CD4-positive, alpha-beta T cell (primary cell): ENCODE measurements at regions of chr12 and their contacts with region 1.

Region 1: DNA sequence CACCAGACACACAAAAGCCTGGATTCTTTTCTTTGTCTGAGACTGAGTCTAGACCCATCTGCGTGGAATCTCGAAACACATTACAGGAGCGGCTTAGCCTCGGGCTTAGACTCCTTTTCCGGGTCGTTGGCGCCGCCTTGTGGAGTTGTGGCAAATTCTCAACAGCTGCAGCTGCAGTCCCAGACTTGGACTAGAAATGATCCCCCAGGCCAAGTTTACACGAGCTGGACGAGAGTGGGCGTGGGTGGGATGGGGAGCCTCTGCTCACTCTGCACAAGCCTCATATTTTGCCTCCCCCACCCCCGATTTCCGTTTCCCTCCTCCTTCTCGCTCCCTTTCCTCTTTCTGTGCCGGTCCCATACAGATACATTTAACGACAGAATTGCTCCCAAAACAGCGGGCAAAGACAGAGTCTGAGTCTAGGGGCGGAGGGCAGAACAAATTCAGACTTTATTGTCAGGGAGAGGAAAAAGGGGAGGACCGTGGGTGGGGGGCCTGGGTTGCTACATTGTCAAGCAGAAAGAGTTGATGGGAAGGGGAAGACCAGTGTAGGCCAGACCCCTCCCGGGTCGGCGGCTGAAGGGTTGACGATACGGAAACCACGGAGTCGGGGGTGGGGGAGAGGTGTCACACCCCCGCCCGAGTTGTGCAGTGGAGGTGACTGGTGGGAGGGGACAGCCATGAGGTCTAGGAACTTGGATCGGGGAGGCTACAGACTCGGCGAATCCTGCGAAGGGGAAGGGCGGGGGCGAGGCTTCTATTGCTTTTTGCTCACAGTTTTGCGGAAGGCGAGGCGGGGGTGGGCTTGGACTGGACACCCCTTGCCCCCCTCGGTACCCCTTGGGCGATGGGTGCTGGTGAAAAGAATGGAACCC is 4.7 kb upstream of the GPR84 start:
- DNase-seq: peak; percentile 85 to 95 (median 88)
- ATAC-seq: peak; percentile 97
- H3K4me3 ChIP-seq: peak overlapping the region; percentile 12
- H3K4me3 Mint-ChIP-seq: peak overlapping the region; percentile 57
- H3K27ac ChIP-seq: no peak overlapping the region
- H3K27ac Mint-ChIP-seq: no peak overlapping the region
- H3K4me1 ChIP-seq: peaks cover 35% of the 10 kb centered on the region
- H3K4me1 Mint-ChIP-seq: peaks cover 39% of the 10 kb centered on the region
- H3K27me3 ChIP-seq: no peaks in the 10 kb centered on the region
- H3K27me3 Mint-ChIP-seq: no peaks in the 10 kb centered on the region
- CTCF ChIP-seq: peak; percentile 85

Region 2: GRCh38 chr12:54220092-54220557 is 148.8 kb before region 1 on chr12:
- CTCF ChIA-PET with region 1: interaction called, 3 read pairs
- POLR2A ChIA-PET with region 1: interaction called, 3 read pairs
- intact Hi-C with region 1: loop called (anchors 1 to 2 kb)
- DNase-seq: peak; percentile 46 to 80 (median 56)
- ATAC-seq: peak; percentile 57
- H3K4me3 ChIP-seq: no peak overlapping the region
- H3K4me3 Mint-ChIP-seq: no peak overlapping the region
- H3K27ac ChIP-seq: no peak overlapping the region
- H3K27ac Mint-ChIP-seq: no peak overlapping the region
- H3K4me1 ChIP-seq: peaks cover 35% of the 10 kb centered on the region
- H3K4me1 Mint-ChIP-seq: peaks cover 42% of the 10 kb centered on the region
- H3K27me3 ChIP-seq: no peaks in the 10 kb centered on the region
- H3K27me3 Mint-ChIP-seq: peaks cover 8% of the 10 kb centered on the region
- CTCF ChIP-seq: peak; percentile 60

Region 3: GRCh38 chr12:54294152-54294952 is 74.6 kb before region 1 on chr12:
- CTCF ChIA-PET with region 1: interaction called, 7 read pairs
- POLR2A ChIA-PET with region 1: no interaction called
- intact Hi-C with region 1: loop called (anchors 1 kb)
- DNase-seq: peak in 13 of 14 experiments; percentile 35 to 74 (median 53)
- ATAC-seq: peak; percentile 72
- H3K4me3 ChIP-seq: no peak overlapping the region
- H3K4me3 Mint-ChIP-seq: no peak overlapping the region
- H3K27ac ChIP-seq: no peak overlapping the region
- H3K27ac Mint-ChIP-seq: no peak overlapping the region
- H3K4me1 ChIP-seq: peaks cover 9% of the 10 kb centered on the region
- H3K4me1 Mint-ChIP-seq: peaks cover 6% of the 10 kb centered on the region
- H3K27me3 ChIP-seq: peaks cover 1 to 3% of the 10 kb centered on the region in 2 experiments
- H3K27me3 Mint-ChIP-seq: peaks cover 10% of the 10 kb centered on the region
- CTCF ChIP-seq: peak; percentile 71

Region 4: DNA sequence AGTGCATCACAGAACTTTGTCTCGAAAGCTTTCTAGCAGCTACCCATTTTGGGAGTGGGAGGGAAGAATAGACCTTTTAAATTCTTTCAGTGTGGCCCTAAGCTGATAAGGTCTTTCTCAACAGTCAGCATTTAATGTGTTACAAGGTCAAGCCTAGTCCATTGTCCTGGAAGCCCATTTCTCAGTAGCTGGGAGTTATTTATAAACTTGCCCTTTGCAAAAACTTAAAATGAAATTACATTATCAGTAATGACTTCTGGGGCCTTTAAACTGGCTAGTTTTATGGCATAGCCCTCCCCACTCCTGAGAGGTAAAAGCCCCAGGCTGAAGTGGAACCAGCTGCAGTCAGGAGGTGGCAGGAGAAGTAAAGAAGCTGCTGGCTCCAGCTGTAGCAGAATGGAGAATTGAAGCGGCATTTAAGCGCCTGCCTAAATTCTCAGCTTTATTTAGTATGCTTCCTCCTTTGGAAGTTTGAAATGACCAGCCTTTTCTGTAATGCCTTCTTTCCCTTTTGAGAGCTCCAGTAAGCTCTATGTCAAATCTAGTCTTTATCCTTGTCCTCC is 31.6 kb before region 1 on chr12:
- CTCF ChIA-PET with region 1: interaction called, 27 read pairs
- POLR2A ChIA-PET with region 1: no interaction called
- intact Hi-C with region 1: loop called (anchors 2 to 5 kb)
- DNase-seq: no peak
- ATAC-seq: no peak
- H3K4me3 ChIP-seq: no peak overlapping the region
- H3K4me3 Mint-ChIP-seq: no peak overlapping the region
- H3K27ac ChIP-seq: no peak overlapping the region
- H3K27ac Mint-ChIP-seq: no peak overlapping the region
- H3K4me1 ChIP-seq: peaks cover 16% of the 10 kb centered on the region
- H3K4me1 Mint-ChIP-seq: peaks cover 30% of the 10 kb centered on the region
- H3K27me3 ChIP-seq: no peaks in the 10 kb centered on the region
- H3K27me3 Mint-ChIP-seq: no peaks in the 10 kb centered on the region
- CTCF ChIP-seq: no peak

Region 5: GRCh38 chr12:54398995-54399793 is 30.2 kb after region 1 on chr12:
- CTCF ChIA-PET with region 1: interaction called, 10 read pairs
- POLR2A ChIA-PET with region 1: no interaction called
- intact Hi-C with region 1: no loop called
- DNase-seq: peak; percentile 80 to 93 (median 88)
- ATAC-seq: peak; percentile 98
- H3K4me3 ChIP-seq: no peak overlapping the region
- H3K4me3 Mint-ChIP-seq: no peak overlapping the region
- H3K27ac ChIP-seq: no peak overlapping the region
- H3K27ac Mint-ChIP-seq: peak overlapping the region; percentile 4
- H3K4me1 ChIP-seq: peaks cover 13% of the 10 kb centered on the region
- H3K4me1 Mint-ChIP-seq: peaks cover 18% of the 10 kb centered on the region
- H3K27me3 ChIP-seq: no peaks in the 10 kb centered on the region
- H3K27me3 Mint-ChIP-seq: no peaks in the 10 kb centered on the region
- CTCF ChIP-seq: peak; percentile 97